ENCODE measurements at regions of chr1 and their contacts with region 1.

Region 1: DNA sequence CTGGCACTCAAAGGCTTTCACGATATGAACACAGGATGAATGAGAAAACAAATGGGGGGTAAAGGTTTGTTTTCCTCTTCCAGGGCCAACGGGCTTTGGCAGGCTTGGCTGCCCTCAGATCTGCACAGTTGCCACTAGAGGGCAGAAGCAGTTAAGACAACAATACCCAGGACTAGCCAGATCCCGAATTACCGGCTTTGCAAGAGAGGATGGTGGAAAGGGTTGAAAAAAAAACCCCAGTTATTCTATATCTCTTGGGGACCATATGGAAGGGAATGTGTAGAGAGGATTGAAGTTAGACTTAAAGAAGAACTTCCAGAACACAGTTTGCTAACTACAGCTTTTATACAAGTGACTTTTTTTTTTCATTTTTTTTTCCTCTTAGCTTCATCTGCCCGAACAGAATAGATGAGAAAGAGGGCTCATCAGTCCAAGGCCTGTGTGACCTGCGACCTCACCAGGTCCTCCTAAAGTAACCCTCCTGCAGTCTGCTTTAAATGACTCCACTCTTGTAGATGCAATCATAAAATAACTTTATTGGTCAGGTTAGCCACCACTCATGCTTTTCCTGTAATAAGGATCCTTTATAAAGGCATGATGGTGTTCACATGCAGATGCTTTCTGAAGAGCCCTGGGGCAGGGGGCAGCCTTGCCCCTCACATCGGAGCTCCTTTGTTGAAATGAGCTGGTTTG is 10.7 kb downstream of the FMOD start:
- DNase-seq: peak; percentile 90
- H3K4me3 ChIP-seq: no peak overlapping the region
- H3K27ac ChIP-seq: no peak overlapping the region
- H3K4me1 ChIP-seq: no peaks in the 10 kb centered on the region
- H3K27me3 ChIP-seq: peaks cover 8% of the 10 kb centered on the region
- CTCF ChIP-seq: peak; percentile 97

Region 2: GRCh38 chr1:202888531-202889360 is 451.5 kb before region 1 on chr1 and contains the start of gene RABIF:
- CTCF ChIA-PET with region 1: interaction called, 16 read pairs
- POLR2A ChIA-PET with region 1: no interaction called
- intact Hi-C with region 1: no loop called
- DNase-seq: peak; percentile 98
- H3K4me3 ChIP-seq: peak within 1 kb of the TSS; percentile 73
- H3K27ac ChIP-seq: peak within 1 kb of the TSS; percentile 84
- H3K4me1 ChIP-seq: no peaks in the 10 kb centered on the region
- H3K27me3 ChIP-seq: no peaks in the 10 kb centered on the region
- CTCF ChIP-seq: 0 out of 2 replicates have a peak, but pooled peaks have one; percentile 18
- total RNA-seq, gene RABIF: 11.1 and 12.2 TPM in 2 replicates

Region 3: DNA sequence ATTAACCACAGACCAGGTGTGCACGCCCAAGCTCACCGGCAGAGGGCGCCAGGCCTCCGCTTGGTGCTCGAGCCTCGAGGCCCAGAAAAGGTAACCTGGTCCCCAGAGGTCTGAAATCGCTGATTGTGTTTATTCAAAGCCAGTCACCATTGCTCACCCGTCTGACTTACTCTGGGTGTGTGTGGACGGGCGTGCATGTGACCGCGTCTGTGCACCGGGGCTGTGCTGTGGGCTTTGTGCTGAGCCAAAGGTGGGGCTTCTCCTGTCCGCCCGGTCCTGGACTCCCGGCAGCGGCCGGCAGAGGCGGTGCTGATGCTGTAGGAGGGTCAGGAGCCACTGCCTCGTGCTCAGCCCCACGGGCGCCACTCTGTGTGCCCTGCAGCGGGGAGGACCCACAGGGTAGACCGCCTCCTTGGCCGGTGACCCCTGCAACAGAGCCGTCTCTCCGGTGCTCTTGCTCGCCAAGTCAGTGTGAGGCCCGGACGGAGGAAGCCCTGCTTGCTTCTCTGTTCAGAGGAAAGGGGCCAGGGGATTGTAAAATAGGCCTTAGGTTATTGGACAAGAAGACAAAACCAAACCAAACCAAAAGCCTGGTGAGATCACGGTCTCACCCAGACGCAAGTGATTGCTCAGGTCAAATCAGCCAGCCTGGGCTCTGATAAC is 66.9 kb before region 1 on chr1:
- CTCF ChIA-PET with region 1: interaction called, 6 read pairs
- POLR2A ChIA-PET with region 1: no interaction called
- intact Hi-C with region 1: loop called (anchors 1 kb)
- DNase-seq: peak; percentile 87
- H3K4me3 ChIP-seq: no peak overlapping the region
- H3K27ac ChIP-seq: no peak overlapping the region
- H3K4me1 ChIP-seq: peaks cover 31% of the 10 kb centered on the region
- H3K27me3 ChIP-seq: no peaks in the 10 kb centered on the region
- CTCF ChIP-seq: peak; percentile 99

Region 4: GRCh38 chr1:203447151-203447550 is 106.9 kb after region 1 on chr1:
- CTCF ChIA-PET with region 1: no interaction called
- POLR2A ChIA-PET with region 1: no interaction called
- intact Hi-C with region 1: no loop called
- DNase-seq: no peak
- H3K4me3 ChIP-seq: no peak overlapping the region
- H3K27ac ChIP-seq: no peak overlapping the region
- H3K4me1 ChIP-seq: peaks cover 43% of the 10 kb centered on the region
- H3K27me3 ChIP-seq: no peaks in the 10 kb centered on the region
- CTCF ChIP-seq: no peak

Region 5: DNA sequence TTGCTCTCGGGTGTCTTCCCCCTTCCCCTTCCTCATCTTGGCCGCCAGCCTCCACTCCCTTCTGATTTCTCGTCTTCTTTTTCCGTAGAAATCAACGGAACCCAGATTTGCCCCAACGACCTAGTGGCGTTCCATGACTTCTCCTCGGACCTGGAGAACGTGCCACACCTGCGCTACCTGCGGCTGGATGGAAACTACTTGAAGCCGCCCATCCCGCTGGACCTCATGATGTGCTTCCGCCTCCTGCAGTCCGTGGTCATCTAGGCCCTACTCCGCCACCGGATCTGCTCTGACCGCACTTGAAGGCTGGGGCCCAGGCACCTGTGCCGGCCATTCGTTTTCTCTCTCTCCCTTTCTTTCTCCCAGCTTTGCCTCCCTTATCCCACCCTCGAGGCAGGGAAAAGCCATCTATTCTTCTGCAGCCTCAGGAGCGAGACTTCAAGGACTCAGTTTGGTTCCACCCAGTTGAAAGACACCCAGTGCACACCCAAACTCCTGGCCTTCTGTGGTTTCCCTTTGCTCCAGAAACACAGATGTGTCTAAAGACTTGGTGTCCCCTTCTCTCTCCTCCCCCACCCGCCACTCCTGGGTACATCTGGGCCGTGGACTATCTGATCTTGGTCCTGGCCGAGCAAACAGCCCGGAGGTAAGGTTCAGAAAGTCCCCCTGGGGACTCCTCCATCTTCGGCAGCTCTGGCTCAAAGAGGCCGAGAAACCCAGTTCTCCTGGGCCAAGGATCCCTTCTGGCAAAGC is 146.5 kb after region 1 on chr1:
- CTCF ChIA-PET with region 1: interaction called, 15 read pairs
- POLR2A ChIA-PET with region 1: no interaction called
- intact Hi-C with region 1: loop called (anchors 1 kb)
- DNase-seq: no peak
- H3K4me3 ChIP-seq: peak overlapping the region; percentile 48
- H3K27ac ChIP-seq: peak overlapping the region; percentile 53
- H3K4me1 ChIP-seq: peaks cover 4% of the 10 kb centered on the region
- H3K27me3 ChIP-seq: no peaks in the 10 kb centered on the region
- CTCF ChIP-seq: no peak

Region 6: DNA sequence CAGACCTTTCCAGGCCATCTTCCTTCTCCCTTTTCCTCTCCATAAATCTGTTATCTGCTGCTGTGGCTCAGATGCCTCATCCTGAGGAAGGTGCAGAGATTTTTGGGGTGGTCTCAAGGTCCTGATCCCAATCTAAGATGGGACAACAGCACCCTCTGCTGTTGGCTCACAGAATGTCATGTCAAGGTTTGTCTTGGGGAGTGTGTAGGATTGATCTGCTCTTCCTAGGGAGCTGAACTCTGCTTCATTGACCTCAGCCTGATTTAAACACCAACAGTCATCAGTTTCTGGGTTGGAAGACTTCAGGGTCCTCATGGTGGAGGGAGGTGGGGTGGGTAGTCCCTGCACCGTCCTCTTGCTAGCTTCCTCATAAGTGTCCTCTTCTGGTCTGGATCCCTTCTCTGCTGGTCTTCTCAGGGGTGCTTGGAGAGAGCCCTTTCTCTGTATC is 361.9 kb after region 1 on chr1:
- CTCF ChIA-PET with region 1: interaction called, 5 read pairs
- POLR2A ChIA-PET with region 1: no interaction called
- intact Hi-C with region 1: loop called (anchors 5 kb)
- DNase-seq: peak; percentile 73
- H3K4me3 ChIP-seq: no peak overlapping the region
- H3K27ac ChIP-seq: no peak overlapping the region
- H3K4me1 ChIP-seq: no peaks in the 10 kb centered on the region
- H3K27me3 ChIP-seq: no peaks in the 10 kb centered on the region
- CTCF ChIP-seq: peak; percentile 90

Measured in A673 (cell line).